Mammary epithelial cell (primary cell): ENCODE measurements at regions of chr12 and their contacts with region 1.

Region 1: GRCh38 chr12:65392491-65392890 is 114.0 kb downstream of the MSRB3 start:
- DNase-seq: no peak
- H3K4me3 ChIP-seq: no peak overlapping the region
- H3K27ac ChIP-seq: no peak overlapping the region
- H3K4me1 ChIP-seq: no peaks in the 10 kb centered on the region
- H3K27me3 ChIP-seq: no peaks in the 10 kb centered on the region
- CTCF ChIP-seq: no peak

Region 2: GRCh38 chr12:65495233-65495632 is 102.7 kb after region 1 on chr12:
- CTCF ChIA-PET with region 1: no interaction called
- dilution Hi-C with region 1: loop called (anchors 5 kb)
- in situ Hi-C with region 1: no loop called
- intact Hi-C with region 1: no loop called
- DNase-seq: peak; percentile 64
- H3K4me3 ChIP-seq: no peak overlapping the region
- H3K27ac ChIP-seq: no peak overlapping the region
- H3K4me1 ChIP-seq: peaks cover 15% of the 10 kb centered on the region
- H3K27me3 ChIP-seq: no peaks in the 10 kb centered on the region
- CTCF ChIP-seq: no peak